ENCODE measurements at regions of chr2 and their contacts with region 1.

Region 1: GRCh38 chr2:106638043-106638442 is 150.9 kb downstream of the CD8B2 start:
- DNase-seq: no peak
- H3K4me3 ChIP-seq: no peak overlapping the region
- H3K27ac ChIP-seq: no peak overlapping the region
- H3K4me1 ChIP-seq: peaks cover 0 to 33% (median 16%) of the 10 kb centered on the region in 4 donors
- H3K27me3 ChIP-seq: no peaks in the 10 kb centered on the region
- CTCF ChIP-seq: peak in 3 of 4 experiments; percentile 15 to 52 (median 23)
- EP300 ChIP-seq: no peak
- POLR2A ChIP-seq: no peak

Region 2: DNA sequence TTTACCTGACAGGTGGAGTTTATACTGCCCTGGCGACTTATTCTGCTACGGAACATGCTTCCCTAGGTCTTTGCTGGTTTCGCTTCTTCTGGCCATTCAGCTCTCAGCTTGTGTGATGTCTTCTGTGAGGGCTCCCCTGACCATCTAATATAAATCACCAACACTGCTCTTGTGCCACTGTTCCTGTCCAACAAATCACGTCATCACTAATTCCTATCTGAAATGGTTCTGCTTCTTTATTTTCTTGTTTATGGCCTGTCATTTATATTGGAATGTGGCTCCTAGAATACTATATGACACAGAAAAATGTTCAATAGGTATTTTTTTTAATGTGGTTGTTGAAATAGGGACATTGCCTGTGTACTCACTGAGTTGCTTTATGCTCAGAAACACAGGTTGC is 20.6 kb after region 1 on chr2:
- intact Hi-C with region 1: no loop called
- DNase-seq: no peak
- H3K4me3 ChIP-seq: no peak overlapping the region
- H3K27ac ChIP-seq: no peak overlapping the region
- H3K4me1 ChIP-seq: no peaks in the 10 kb centered on the region
- H3K27me3 ChIP-seq: no peaks in the 10 kb centered on the region
- CTCF ChIP-seq: no peak
- EP300 ChIP-seq: no peak
- POLR2A ChIP-seq: no peak

Region 3: DNA sequence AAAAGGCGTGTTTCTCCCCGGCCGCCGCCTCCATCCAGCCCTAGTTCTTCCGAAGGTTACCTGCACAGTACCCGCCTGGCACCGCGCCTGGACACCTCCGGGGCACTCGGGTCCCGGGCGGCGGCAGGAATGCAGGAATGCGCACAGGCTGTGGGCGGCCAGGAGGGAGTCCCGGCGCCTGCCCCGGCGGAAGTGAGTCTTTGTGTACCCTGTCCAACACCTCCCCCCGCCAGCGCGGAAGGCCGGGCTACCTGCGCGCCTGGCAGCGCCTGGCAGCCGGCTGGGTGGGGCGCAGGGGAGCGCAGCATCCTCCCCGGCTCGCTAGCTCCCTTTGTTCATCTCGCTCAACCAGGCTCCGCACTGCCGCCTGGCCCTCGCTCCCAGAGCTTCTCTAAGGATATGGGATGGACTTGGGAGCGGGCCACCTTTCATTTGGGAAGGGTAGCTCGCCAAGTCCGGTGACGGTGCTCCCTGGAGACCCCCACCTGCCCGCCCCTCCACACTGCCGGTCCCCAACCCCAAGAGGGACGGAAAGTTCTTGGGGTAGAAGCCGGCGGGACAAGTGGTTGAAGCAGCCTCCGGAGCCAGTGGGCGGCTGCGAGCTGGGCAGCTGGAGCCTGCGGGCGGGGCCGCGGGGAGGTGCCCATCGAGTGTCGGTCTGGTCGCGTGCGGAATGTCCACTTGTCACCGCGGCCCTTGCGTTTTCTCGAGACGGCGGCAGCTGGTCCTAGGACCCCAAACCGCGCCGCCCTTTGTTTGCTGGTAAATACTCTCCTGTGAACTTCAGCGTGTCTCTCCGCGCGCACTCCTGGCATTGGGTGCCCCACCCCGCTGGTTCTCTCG is 249.1 kb after region 1 on chr2:
- intact Hi-C with region 1: loop called (anchors 10 kb)
- DNase-seq: no peak
- H3K4me3 ChIP-seq: peak overlapping the region; percentile 27 to 76 (median 54)
- H3K27ac ChIP-seq: peak overlapping the region; percentile 9 to 81 (median 57)
- H3K4me1 ChIP-seq: peaks cover 0 to 31% (median 20%) of the 10 kb centered on the region in 4 donors
- H3K27me3 ChIP-seq: peaks cover 0 to 21% (median 2%) of the 10 kb centered on the region in 3 donors
- CTCF ChIP-seq: no peak
- EP300 ChIP-seq: no peak
- POLR2A ChIP-seq: no peak

Region 4: GRCh38 chr2:107932979-107933378 is 1294.9 kb after region 1 on chr2:
- intact Hi-C with region 1: loop called (anchors 5 kb)
- DNase-seq: no peak
- H3K4me3 ChIP-seq: no peak overlapping the region
- H3K27ac ChIP-seq: no peak overlapping the region
- H3K4me1 ChIP-seq: peaks cover 0 to 4% (median 0%) of the 10 kb centered on the region in 4 donors
- H3K27me3 ChIP-seq: no peaks in the 10 kb centered on the region
- CTCF ChIP-seq: peak in 2 of 4 experiments; percentile 21 to 46
- EP300 ChIP-seq: no peak
- POLR2A ChIP-seq: no peak

Measured in sigmoid colon (tissue), 7 donors.